Breast epithelium (tissue), 4 donors: ENCODE measurements at regions of chr4 and their contacts with region 1.

Region 1: GRCh38 chr4:18882463-18882862 is 860.9 kb upstream of the LCORL start:
- DNase-seq: no peak
- H3K4me3 ChIP-seq: no peak overlapping the region
- H3K27ac ChIP-seq: no peak overlapping the region
- H3K4me1 ChIP-seq: no peaks in the 10 kb centered on the region
- H3K27me3 ChIP-seq: no peaks in the 10 kb centered on the region
- CTCF ChIP-seq: no peak
- POLR2A ChIP-seq: no peak

Region 2: DNA sequence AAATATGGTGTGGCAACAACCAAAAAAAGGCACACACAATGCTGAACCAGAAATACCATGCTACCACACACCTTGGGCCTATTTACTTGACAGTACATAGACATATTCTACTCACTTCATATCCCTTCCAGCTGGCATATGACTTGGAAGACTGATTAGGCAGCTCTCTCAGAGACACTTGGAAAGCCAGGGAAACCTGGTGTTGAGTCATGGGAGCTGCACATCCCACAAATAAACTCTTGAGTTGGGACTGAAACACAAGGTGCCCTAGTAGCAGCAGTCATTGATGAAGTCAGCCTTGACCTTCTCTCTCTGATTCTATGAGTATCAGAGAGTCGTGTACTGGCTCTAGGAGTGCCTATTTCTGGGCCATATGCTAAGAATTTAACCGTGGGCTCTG is 84.3 kb before region 1 on chr4:
- intact Hi-C with region 1: loop called (anchors 5 kb)
- DNase-seq: no peak
- H3K4me3 ChIP-seq: no peak overlapping the region
- H3K27ac ChIP-seq: no peak overlapping the region
- H3K4me1 ChIP-seq: no peaks in the 10 kb centered on the region
- H3K27me3 ChIP-seq: no peaks in the 10 kb centered on the region
- CTCF ChIP-seq: no peak
- POLR2A ChIP-seq: no peak